AG04450 (cell line): ENCODE measurements at regions of chr2 and their contacts with region 1.

Region 1: GRCh38 chr2:24792874-24793760 is at the starts of genes CENPO and PTRHD1:
- DNase-seq: peak; percentile 93
- H3K4me3 ChIP-seq: peak within 1 kb of the TSS; percentile 97
- H3K27ac ChIP-seq: peak within 1 kb of the TSS; percentile 94
- H3K27me3 ChIP-seq: no peaks in the 10 kb centered on the region
- CTCF ChIP-seq: peak; percentile 69
- polyA plus RNA-seq, gene CENPO: 12.1 and 15.7 TPM in 2 replicates
- polyA plus RNA-seq, gene PTRHD1: 42.5 and 51.5 TPM in 2 replicates

Region 2: GRCh38 chr2:24779116-24779515 is 14.0 kb before region 1 on chr2:
- CTCF ChIA-PET with region 1: interaction called, 12 read pairs
- POLR2A ChIA-PET with region 1: interaction called, 3 read pairs
- DNase-seq: no peak
- H3K4me3 ChIP-seq: no peak overlapping the region
- H3K27ac ChIP-seq: no peak overlapping the region
- H3K27me3 ChIP-seq: peaks cover 2% of the 10 kb centered on the region
- CTCF ChIP-seq: no peak

Region 3: GRCh38 chr2:24816884-24817283 is 23.8 kb after region 1 on chr2:
- CTCF ChIA-PET with region 1: interaction called, 22 read pairs
- POLR2A ChIA-PET with region 1: interaction called, 3 read pairs
- DNase-seq: peak; percentile 56
- H3K4me3 ChIP-seq: no peak overlapping the region
- H3K27ac ChIP-seq: peak overlapping the region; percentile 62
- H3K27me3 ChIP-seq: no peaks in the 10 kb centered on the region
- CTCF ChIP-seq: no peak

Region 4: GRCh38 chr2:24833821-24834732 is 41.0 kb after region 1 on chr2:
- CTCF ChIA-PET with region 1: no interaction called
- POLR2A ChIA-PET with region 1: no interaction called
- DNase-seq: no peak
- H3K4me3 ChIP-seq: no peak overlapping the region
- H3K27ac ChIP-seq: no peak overlapping the region
- H3K27me3 ChIP-seq: no peaks in the 10 kb centered on the region
- CTCF ChIP-seq: no peak

Region 5: DNA sequence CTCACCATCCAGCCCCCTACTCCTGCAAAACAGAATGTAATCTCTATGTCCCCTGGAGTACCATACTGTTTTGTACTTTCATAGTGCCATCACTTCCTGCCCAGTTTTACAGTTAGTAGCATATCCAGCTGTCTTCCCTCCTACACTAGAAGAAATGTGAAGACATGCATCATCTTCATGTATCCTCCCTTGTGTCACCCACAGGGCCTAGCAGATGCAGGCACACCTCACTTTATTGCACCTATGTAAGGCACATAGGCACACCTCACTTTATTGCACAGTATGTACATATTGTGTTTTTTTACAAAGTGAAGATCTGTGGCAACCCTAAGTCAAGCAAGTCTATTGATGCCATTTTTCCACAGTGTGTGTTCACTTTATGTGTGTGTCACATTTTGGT is 166.6 kb after region 1 on chr2:
- CTCF ChIA-PET with region 1: no interaction called
- POLR2A ChIA-PET with region 1: no interaction called
- DNase-seq: no peak
- H3K4me3 ChIP-seq: no peak overlapping the region
- H3K27ac ChIP-seq: no peak overlapping the region
- H3K27me3 ChIP-seq: no peaks in the 10 kb centered on the region
- CTCF ChIP-seq: no peak